Activated naive CD4-positive, alpha-beta T cell treated with anti-CD3 and anti-CD28 coated beads for 36 hours (primary cell): ENCODE measurements at regions of chr6 and their contacts with region 1.

Region 1: DNA sequence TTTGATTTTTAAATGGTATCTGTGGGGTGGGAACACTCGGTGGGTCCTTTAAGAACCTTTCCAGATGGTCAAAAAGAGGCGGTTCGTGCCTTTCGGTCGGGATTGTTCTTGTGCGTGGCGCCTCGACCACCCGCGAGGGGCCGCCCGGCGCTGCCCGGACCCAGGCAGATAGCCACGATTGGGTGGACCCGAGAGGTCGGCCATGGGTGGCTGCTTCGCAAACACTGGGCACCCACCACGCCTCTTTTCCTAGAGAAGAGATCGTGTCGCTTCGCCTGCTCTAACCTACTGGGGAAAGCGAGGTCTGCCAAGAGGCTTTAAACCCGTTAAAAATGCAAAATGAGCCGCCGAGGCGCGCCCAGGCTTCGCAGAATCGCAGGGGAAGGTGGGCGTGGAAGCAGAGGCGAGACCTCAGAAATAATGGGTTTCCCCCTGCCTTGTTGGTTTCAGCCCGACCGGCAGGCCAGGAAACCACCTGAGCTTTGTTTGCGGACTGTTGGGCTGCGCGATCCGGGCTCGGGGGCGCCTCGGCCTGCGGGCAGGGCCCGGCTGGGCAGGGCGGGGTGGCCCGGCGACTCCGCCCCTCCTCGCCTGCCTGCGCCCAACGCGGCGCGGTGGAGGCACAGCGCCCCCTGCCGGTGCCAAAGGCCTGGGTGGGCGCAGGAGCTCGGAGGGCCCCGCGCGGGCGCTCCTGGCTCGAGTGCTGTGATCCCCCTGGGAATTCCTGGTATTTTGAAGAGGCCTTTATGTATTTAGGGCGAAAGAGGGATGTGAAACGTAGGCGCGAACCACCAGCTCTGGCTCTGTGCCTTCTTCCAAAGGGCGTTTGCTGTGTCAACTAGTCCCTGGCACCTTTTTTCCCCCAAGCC is 1.6 kb downstream of the MARCKS start:
- DNase-seq: peak; percentile 83
- H3K4me3 Mint-ChIP-seq: peak overlapping the region; percentile 34
- H3K27ac Mint-ChIP-seq: no peak overlapping the region
- H3K4me1 Mint-ChIP-seq: peaks cover 24% of the 10 kb centered on the region
- H3K27me3 Mint-ChIP-seq: peaks cover 36% of the 10 kb centered on the region

Region 2: DNA sequence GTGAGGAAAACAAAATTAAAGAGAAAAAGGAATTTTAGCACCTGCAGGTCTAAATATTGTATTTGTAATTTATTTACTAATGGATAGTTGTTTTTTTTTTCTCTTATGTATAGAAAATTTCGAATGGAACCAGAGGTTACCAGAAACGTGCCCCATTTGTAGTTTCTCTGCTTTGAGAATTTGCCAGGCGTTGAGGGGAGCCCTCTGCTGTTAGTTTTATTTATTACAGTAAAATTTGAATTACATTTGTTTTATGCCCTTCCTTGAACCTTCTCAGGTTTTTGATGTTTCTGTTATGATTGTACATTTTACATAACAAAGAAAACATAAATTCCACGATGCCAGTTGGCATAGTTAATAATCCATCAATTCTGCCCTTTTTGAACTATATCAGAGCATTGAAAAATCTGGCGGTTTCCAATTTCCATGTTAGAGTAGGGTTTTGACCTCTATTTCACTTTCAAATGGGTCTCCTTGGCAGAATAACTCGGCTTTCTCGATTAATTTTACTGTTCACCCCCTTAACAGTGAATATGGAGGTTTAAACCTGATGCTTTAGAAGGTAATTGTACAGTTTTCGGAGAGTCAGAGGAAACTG is 1546.7 kb before region 1 on chr6:
- CTCF ChIA-PET with region 1: no interaction called
- intact Hi-C with region 1: loop called (anchors 10 kb)
- DNase-seq: peak; percentile 17
- H3K4me3 Mint-ChIP-seq: no peak overlapping the region
- H3K27ac Mint-ChIP-seq: no peak overlapping the region
- H3K4me1 Mint-ChIP-seq: no peaks in the 10 kb centered on the region
- H3K27me3 Mint-ChIP-seq: no peaks in the 10 kb centered on the region

Region 3: GRCh38 chr6:112879920-112880413 is 978.7 kb before region 1 on chr6:
- CTCF ChIA-PET with region 1: no interaction called
- intact Hi-C with region 1: loop called (anchors 5 kb)
- DNase-seq: peak; percentile 31
- H3K4me3 Mint-ChIP-seq: peak overlapping the region; percentile 36
- H3K27ac Mint-ChIP-seq: no peak overlapping the region
- H3K4me1 Mint-ChIP-seq: no peaks in the 10 kb centered on the region
- H3K27me3 Mint-ChIP-seq: no peaks in the 10 kb centered on the region

Region 4: GRCh38 chr6:113632220-113632864 is 226.4 kb before region 1 on chr6:
- CTCF ChIA-PET with region 1: interaction called, 5 read pairs
- intact Hi-C with region 1: loop called (anchors 1 kb)
- DNase-seq: peak; percentile 58
- H3K4me3 Mint-ChIP-seq: no peak overlapping the region
- H3K27ac Mint-ChIP-seq: no peak overlapping the region
- H3K4me1 Mint-ChIP-seq: peaks cover 28% of the 10 kb centered on the region
- H3K27me3 Mint-ChIP-seq: peaks cover 17% of the 10 kb centered on the region

Region 5: GRCh38 chr6:113970805-113971676 is 112.3 kb after region 1 on chr6 and contains the start of gene HDAC2:
- CTCF ChIA-PET with region 1: no interaction called
- intact Hi-C with region 1: loop called (anchors 1 kb)
- DNase-seq: peak; percentile 84
- H3K4me3 Mint-ChIP-seq: peak within 1 kb of the TSS; percentile 95
- H3K27ac Mint-ChIP-seq: peak within 1 kb of the TSS; percentile 95
- H3K4me1 Mint-ChIP-seq: peaks cover 31% of the 10 kb centered on the region
- H3K27me3 Mint-ChIP-seq: no peaks in the 10 kb centered on the region
- total RNA-seq, gene HDAC2: 75.8 to 82.3 TPM